Ascending aorta (tissue), 2 donors: ENCODE measurements at regions of chr6 and their contacts with region 1.

Region 1: DNA sequence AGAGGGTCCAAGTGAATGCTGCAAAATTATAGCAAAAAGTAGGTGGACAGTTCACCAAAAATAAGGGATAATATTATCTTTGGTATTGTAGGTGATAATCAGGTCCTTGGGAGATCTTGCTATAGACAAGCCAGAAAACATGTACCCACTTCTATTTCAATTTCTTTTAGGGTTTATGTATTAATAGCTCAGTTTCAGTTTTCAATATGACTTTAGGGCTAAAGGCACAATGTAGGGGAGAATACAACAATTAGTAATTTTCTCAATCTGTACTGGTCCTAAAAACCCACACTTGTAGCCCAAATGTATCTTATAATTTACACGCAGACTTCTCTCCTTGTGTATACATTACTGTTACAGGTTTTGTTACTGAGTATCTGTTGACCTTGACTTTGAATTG is 307.0 kb upstream of the ID4 start:
- DNase-seq: no peak
- H3K4me3 ChIP-seq: no peak overlapping the region
- H3K27ac ChIP-seq: no peak overlapping the region
- H3K4me1 ChIP-seq: peaks cover 0 to 4% of the 10 kb centered on the region in 2 donors
- H3K27me3 ChIP-seq: no peaks in the 10 kb centered on the region
- CTCF ChIP-seq: no peak

Region 2: DNA sequence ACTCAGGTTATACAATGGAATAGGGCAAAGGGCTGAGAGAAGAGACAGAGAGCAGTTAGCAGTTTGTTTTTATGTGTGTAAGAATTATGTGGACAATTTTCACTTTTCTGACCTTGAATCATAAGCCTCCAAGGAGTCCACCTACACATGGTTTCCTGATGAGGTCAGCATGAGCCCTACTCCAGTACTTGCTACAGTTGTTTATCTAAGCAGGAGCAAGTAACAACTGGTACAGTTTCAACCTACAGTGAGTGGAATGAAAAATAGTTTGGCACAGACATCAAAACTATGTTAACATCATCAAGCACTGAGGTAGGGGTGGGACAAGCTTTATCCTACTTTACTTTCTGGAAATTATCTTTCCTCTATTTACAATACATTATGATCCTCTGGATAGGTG is 119.7 kb before region 1 on chr6:
- intact Hi-C with region 1: loop called (anchors 5 kb)
- DNase-seq: no peak
- H3K4me3 ChIP-seq: no peak overlapping the region
- H3K27ac ChIP-seq: no peak overlapping the region
- H3K4me1 ChIP-seq: peaks cover 0 to 5% of the 10 kb centered on the region in 2 donors
- H3K27me3 ChIP-seq: no peaks in the 10 kb centered on the region
- CTCF ChIP-seq: no peak

Region 3: DNA sequence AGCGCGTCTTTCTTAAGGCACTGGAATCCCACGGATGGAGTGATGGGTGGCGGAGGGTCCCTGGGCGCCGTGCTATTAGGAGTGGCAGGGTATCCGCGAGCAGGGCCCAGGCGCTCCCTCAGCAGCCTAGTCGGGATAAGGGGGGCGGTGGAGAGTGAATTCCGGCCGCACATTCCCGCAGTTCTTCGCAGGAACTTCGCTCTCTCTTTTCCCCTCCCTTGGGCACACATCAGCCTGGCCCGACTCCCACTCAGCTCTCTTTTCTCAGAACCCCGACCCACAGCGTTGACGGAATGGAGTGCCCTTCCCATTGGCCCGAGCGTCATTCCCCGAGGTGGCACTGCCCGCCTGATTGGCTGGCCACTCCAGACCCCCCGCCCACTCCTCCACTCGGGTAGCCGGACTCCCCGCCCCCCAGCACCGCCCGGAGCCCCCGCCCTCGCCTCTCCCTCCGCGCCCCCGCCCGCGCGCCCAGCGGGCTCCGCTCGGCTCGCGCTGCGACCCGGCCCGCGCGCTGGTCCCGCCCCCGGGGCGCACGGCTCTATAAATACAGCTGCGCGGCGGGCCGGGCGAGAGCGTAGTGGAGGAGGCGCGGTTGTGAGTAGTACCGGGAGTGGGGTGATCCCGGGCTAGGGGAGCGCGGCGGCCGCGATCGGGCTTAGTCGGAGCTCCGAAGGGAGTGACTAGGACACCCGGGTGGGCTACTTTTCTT is 306.8 kb after region 1 on chr6 and contains the start of gene ID4:
- intact Hi-C with region 1: loop called (anchors 5 kb)
- DNase-seq: peak; percentile 82 to 98
- H3K4me3 ChIP-seq: peak within 1 kb of the TSS; percentile 63 to 95
- H3K27ac ChIP-seq: peak within 1 kb of the TSS; percentile 96
- H3K4me1 ChIP-seq: peaks cover 0 to 3% of the 10 kb centered on the region in 2 donors
- H3K27me3 ChIP-seq: no peaks in the 10 kb centered on the region
- CTCF ChIP-seq: no peak
- total RNA-seq, gene ID4: 103 TPM